ENCODE measurements at regions of chr10 and their contacts with region 1.

Region 1: GRCh38 chr10:93554760-93555432 is 11.6 kb upstream of the FFAR4 start:
- DNase-seq: peak; percentile 56
- ATAC-seq: peak; percentile 95
- H3K4me3 ChIP-seq: no peak overlapping the region
- H3K27ac ChIP-seq: no peak overlapping the region
- H3K4me1 ChIP-seq: no peaks in the 10 kb centered on the region
- H3K27me3 ChIP-seq: peaks cover 8% of the 10 kb centered on the region
- CTCF ChIP-seq: peak; percentile 65
- POLR2A ChIP-seq: no peak
- RAD21 ChIP-seq: peak; percentile 65

Region 2: GRCh38 chr10:93598157-93598556 is 43.3 kb after region 1 on chr10:
- CTCF ChIA-PET with region 1: no interaction called
- POLR2A ChIA-PET with region 1: no interaction called
- dilution Hi-C with region 1: no loop called
- in situ Hi-C with region 1: no loop called
- intact Hi-C with region 1: no loop called
- DNase-seq: no peak
- ATAC-seq: no peak
- H3K4me3 ChIP-seq: no peak overlapping the region
- H3K27ac ChIP-seq: no peak overlapping the region
- H3K4me1 ChIP-seq: peaks cover 1% of the 10 kb centered on the region; the same call in 1 of the 2 replicates
- H3K27me3 ChIP-seq: peaks cover 45% of the 10 kb centered on the region
- CTCF ChIP-seq: no peak
- POLR2A ChIP-seq: no peak
- RAD21 ChIP-seq: no peak

Region 3: DNA sequence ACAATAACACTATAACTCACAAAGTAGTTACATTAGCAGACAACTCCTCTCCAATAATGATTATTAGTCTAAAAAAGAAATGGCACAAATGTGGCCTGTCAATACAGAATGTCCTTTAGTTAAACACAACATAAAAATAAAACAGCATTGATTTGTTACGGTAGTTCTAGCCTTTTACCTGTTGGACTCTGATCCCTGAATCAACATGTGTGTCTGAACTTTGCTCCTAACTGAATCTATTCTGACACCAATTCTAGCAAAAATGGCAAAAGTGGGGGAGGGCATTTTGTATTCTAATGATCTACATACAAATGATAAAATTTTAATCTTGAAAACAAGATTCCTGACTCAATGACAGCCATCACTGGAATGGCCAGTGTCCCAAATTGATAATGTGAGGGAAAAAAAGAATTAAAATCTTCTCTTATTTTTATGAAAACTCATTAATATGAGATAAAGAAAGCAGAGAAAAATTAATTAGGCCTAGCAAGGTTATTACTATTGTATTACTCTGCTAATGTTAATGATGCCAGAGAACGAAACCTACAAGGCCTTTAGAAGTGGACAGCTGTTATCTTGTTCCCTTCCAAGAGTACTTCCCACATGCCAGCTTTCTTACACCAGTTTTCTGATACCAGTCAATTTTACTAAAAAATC is 117.3 kb after region 1 on chr10:
- CTCF ChIA-PET with region 1: interaction called, 3 read pairs
- POLR2A ChIA-PET with region 1: no interaction called
- dilution Hi-C with region 1: no loop called
- in situ Hi-C with region 1: loop called (anchors 10 kb)
- intact Hi-C with region 1: no loop called
- DNase-seq: no peak
- ATAC-seq: no peak
- H3K4me3 ChIP-seq: no peak overlapping the region
- H3K27ac ChIP-seq: no peak overlapping the region
- H3K4me1 ChIP-seq: no peaks in the 10 kb centered on the region
- H3K27me3 ChIP-seq: no peaks in the 10 kb centered on the region
- CTCF ChIP-seq: no peak
- POLR2A ChIP-seq: no peak
- RAD21 ChIP-seq: no peak

Region 4: GRCh38 chr10:93680412-93681047 is 125.6 kb after region 1 on chr10:
- CTCF ChIA-PET with region 1: interaction called, 5 read pairs
- POLR2A ChIA-PET with region 1: no interaction called
- dilution Hi-C with region 1: no loop called
- in situ Hi-C with region 1: loop called (anchors 10 kb)
- intact Hi-C with region 1: loop called (anchors 1 kb)
- DNase-seq: peak; percentile 37
- ATAC-seq: peak; percentile 79
- H3K4me3 ChIP-seq: no peak overlapping the region
- H3K27ac ChIP-seq: no peak overlapping the region
- H3K4me1 ChIP-seq: no peaks in the 10 kb centered on the region
- H3K27me3 ChIP-seq: no peaks in the 10 kb centered on the region
- CTCF ChIP-seq: peak; percentile 57
- POLR2A ChIP-seq: no peak
- RAD21 ChIP-seq: peak; percentile 77

Region 5: DNA sequence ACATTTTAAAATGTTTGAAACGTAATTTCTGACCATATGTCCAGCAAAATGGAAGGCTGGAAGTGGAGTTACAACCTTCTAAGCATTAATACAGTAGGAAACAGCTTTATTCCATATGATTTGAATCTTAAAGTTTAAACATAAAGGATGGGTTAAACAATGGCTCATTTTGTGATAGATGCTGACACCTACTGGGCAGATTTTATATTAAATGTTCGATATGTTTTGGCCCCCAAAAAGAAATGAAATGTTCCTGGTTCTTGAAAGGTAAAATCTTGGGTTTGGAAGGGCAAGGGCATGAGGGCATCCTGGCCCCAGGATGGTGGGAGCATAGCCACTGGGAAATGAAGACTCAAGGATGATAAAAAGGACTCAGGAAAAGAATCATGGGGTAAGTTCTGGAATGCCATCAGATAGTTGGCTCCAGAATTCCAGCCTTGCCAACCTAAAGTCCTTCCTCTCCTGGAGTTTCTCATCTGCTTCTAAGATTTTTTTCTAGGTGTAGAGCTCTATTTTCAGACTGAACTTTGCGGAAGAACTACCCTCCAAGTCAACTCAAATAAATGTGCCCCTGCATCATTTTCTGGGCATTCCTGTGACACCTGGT is 304.3 kb after region 1 on chr10:
- CTCF ChIA-PET with region 1: no interaction called
- POLR2A ChIA-PET with region 1: no interaction called
- dilution Hi-C with region 1: no loop called
- in situ Hi-C with region 1: no loop called
- intact Hi-C with region 1: loop called (anchors 1 kb)
- DNase-seq: peak; percentile 10
- ATAC-seq: no peak
- H3K4me3 ChIP-seq: no peak overlapping the region
- H3K27ac ChIP-seq: no peak overlapping the region
- H3K4me1 ChIP-seq: no peaks in the 10 kb centered on the region
- H3K27me3 ChIP-seq: peaks cover 10% of the 10 kb centered on the region
- CTCF ChIP-seq: peak; percentile 50
- POLR2A ChIP-seq: no peak
- RAD21 ChIP-seq: peak; percentile 58

Measured in IMR-90 (cell line).